ENCODE measurements at regions of chr5 and their contacts with region 1.

Region 1: DNA sequence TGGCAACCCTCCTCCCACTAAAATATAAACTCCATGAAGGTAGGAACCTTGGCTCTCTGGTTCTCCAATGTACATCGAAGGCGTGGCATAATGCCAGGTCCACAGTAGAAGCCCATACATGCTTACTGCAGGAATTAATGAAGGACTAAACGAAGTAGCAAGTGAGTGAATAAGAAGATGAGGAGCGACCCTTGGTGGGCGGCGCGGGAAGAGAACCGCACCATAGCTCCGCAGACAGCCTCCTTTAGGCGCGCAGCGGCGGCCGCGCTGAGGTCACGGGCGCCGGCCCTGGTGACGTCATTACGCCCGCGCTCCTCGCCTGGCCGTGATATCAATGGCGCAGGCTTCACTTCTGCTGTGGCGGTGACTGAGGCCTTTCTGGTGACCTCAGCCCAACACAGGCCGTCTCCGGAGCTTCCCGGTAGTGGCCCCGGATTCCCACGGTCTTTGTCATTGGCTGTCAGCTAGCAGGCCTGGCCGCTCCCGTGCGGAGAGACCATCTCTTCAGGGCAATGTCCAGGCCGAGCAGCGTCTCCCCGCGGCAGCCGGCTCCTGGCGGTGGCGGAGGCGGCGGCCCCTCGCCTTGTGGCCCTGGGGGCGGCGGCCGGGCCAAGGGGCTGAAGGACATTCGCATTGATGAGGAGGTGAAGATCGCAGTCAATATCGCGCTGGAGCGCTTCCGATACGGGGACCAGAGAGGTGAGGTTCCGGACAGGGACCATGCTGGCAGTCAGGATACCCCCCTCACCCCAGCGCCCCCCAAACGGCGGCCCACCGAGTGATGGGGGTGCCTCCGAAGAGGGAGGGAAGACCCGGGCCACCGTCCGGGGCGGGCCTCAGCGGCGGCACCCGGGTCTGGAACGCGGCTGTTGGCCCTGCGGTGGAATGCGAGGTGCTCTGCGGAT is at the start of gene YTHDC2:
- DNase-seq: peak; percentile 36
- H3K4me3 ChIP-seq: peak within 1 kb of the TSS; percentile 81
- H3K27ac ChIP-seq: no peak within 1 kb of the TSS
- H3K27me3 ChIP-seq: no peaks in the 10 kb centered on the region
- CTCF ChIP-seq: peak; percentile 41
- polyA plus RNA-seq, gene YTHDC2: 8.2 and 10.7 TPM in 2 replicates

Region 2: DNA sequence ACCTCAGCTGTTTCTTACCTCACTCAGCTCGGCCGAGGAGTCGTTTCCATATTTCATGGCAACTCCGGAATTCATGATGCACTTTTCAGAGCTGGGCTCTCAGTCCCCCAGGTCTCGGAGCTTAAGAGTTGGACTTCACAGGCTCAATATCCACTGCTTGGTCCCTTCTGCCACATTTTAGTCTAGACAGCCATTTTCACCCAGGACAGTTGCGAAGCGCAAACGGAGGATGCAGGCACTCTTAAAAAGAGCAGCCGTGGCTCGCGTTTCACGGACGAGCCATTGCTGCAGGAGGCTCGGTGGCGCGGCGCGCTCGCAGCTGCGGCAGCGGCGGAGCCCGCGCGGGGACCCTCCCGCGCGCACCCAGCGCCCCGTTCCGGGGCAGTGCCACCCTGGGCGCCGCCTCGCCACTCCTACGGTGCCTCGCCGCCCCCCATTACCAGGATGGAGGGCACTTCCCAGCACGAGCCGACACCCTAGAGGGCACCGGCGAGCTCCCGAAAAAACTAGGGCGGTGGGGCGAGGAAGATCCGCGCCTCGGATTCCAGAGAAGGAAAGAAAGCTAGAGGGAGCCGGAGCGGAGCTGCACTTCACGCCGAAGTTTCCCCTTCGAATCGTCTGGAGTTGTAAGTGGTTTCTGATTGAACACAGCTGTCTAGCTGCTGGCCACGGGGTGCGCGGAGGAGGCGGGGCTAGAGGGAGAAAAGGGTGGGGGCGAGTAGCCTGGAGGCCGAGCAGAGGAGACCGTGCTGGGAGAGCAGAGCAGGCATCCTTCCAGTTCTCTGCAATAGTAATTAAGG is 219.1 kb before region 1 on chr5:
- CTCF ChIA-PET with region 1: interaction called, 12 read pairs
- POLR2A ChIA-PET with region 1: no interaction called
- DNase-seq: peak; percentile 85
- H3K4me3 ChIP-seq: peak overlapping the region; percentile 89
- H3K27ac ChIP-seq: peak overlapping the region; percentile 90
- H3K27me3 ChIP-seq: peaks cover 6% of the 10 kb centered on the region
- CTCF ChIP-seq: peak; percentile 35

Region 3: GRCh38 chr5:113336975-113337374 is 176.7 kb before region 1 on chr5:
- CTCF ChIA-PET with region 1: interaction called, 19 read pairs
- POLR2A ChIA-PET with region 1: no interaction called
- DNase-seq: no peak
- H3K4me3 ChIP-seq: no peak overlapping the region
- H3K27ac ChIP-seq: peak overlapping the region; percentile 3
- H3K27me3 ChIP-seq: no peaks in the 10 kb centered on the region
- CTCF ChIP-seq: peak; percentile 36

Region 4: GRCh38 chr5:113378959-113379541 is 134.6 kb before region 1 on chr5:
- CTCF ChIA-PET with region 1: interaction called, 50 read pairs
- POLR2A ChIA-PET with region 1: no interaction called
- DNase-seq: peak; percentile 20
- H3K4me3 ChIP-seq: no peak overlapping the region
- H3K27ac ChIP-seq: no peak overlapping the region
- H3K27me3 ChIP-seq: peaks cover 3% of the 10 kb centered on the region
- CTCF ChIP-seq: peak; percentile 74

Region 5: GRCh38 chr5:113538313-113538712 is 24.7 kb after region 1 on chr5:
- CTCF ChIA-PET with region 1: no interaction called
- POLR2A ChIA-PET with region 1: no interaction called
- DNase-seq: no peak
- H3K4me3 ChIP-seq: no peak overlapping the region
- H3K27ac ChIP-seq: no peak overlapping the region
- H3K27me3 ChIP-seq: no peaks in the 10 kb centered on the region
- CTCF ChIP-seq: no peak